ENCODE measurements at regions of chrX and their contacts with region 1.

Region 1: GRCh38 chrX:11533211-11533651 is 132.5 kb downstream of the ARHGAP6 start:
- DNase-seq: no peak
- ATAC-seq: peak; percentile 89 to 96
- H3K4me3 ChIP-seq: no peak overlapping the region
- H3K27ac ChIP-seq: no peak overlapping the region
- H3K4me1 ChIP-seq: peaks cover 0 to 7% of the 10 kb centered on the region in 2 donors
- H3K27me3 ChIP-seq: no peaks in the 10 kb centered on the region
- CTCF ChIP-seq: peak; percentile 73 to 99 (median 85)
- POLR2A ChIP-seq: no peak

Region 2: GRCh38 chrX:11143931-11144678 is 389.1 kb before region 1 on chrX:
- in situ Hi-C with region 1: loop called in 1 of 4 experiments (anchors 5 kb)
- intact Hi-C with region 1: loop called (anchors 1 kb)
- DNase-seq: peak; percentile 5 to 22
- ATAC-seq: peak; percentile 58 to 89
- H3K4me3 ChIP-seq: no peak overlapping the region
- H3K27ac ChIP-seq: no peak overlapping the region
- H3K4me1 ChIP-seq: no peaks in the 10 kb centered on the region
- H3K27me3 ChIP-seq: no peaks in the 10 kb centered on the region
- CTCF ChIP-seq: peak; percentile 40 to 65 (median 59)
- POLR2A ChIP-seq: no peak

Region 3: DNA sequence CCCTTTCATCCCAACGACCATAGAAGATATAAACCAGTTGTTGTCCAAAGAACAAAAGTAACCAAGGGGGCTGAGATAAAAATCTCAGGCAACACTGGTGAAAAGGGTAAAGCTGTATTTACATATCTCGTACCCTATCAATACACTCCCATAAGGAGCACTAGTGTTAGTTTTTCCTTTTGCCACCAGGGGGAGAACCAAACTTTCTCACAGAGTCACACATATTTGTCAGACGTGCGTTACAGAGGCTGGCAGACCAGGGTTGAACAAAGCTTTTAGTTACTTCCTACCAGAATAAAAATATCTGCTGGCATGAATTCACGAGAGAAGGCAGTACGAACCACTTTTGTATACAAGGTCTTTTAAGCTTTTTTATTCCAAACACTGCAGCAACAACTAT is 151.8 kb before region 1 on chrX:
- in situ Hi-C with region 1: no loop called
- intact Hi-C with region 1: loop called (anchors 2 kb)
- DNase-seq: peak; percentile 3 to 19
- ATAC-seq: peak; percentile 71 to 74
- H3K4me3 ChIP-seq: no peak overlapping the region
- H3K27ac ChIP-seq: no peak overlapping the region
- H3K4me1 ChIP-seq: no peaks in the 10 kb centered on the region
- H3K27me3 ChIP-seq: no peaks in the 10 kb centered on the region
- CTCF ChIP-seq: peak in 4 of 5 experiments; percentile 29 to 45 (median 44)
- POLR2A ChIP-seq: no peak

Region 4: GRCh38 chrX:11724122-11725017 is 191.1 kb after region 1 on chrX:
- in situ Hi-C with region 1: loop called in 3 of 4 experiments (anchors 5 to 10 kb)
- intact Hi-C with region 1: loop called (anchors 1 kb)
- DNase-seq: no peak
- ATAC-seq: peak; percentile 47 to 56
- H3K4me3 ChIP-seq: peak overlapping the region in 1 of 4 donors; percentile 16
- H3K27ac ChIP-seq: no peak overlapping the region
- H3K4me1 ChIP-seq: peaks cover 0 to 3% of the 10 kb centered on the region in 2 donors
- H3K27me3 ChIP-seq: no peaks in the 10 kb centered on the region
- CTCF ChIP-seq: peak; percentile 61 to 67 (median 66)
- POLR2A ChIP-seq: no peak

Region 5: GRCh38 chrX:11770320-11770719 is 237.1 kb after region 1 on chrX:
- in situ Hi-C with region 1: loop called (anchors 5 to 25 kb)
- intact Hi-C with region 1: loop called (anchors 1 kb)
- DNase-seq: peak in 1 of 2 donors; percentile 25
- ATAC-seq: peak in 1 of 2 donors; percentile 62
- H3K4me3 ChIP-seq: no peak overlapping the region
- H3K27ac ChIP-seq: no peak overlapping the region
- H3K4me1 ChIP-seq: no peaks in the 10 kb centered on the region
- H3K27me3 ChIP-seq: no peaks in the 10 kb centered on the region
- CTCF ChIP-seq: peak; percentile 54 to 82 (median 75)
- POLR2A ChIP-seq: no peak

Measured in gastrocnemius medialis (tissue), 4 donors.